ENCODE measurements at regions of chr6 and their contacts with region 1.

Region 1: GRCh38 chr6:15776458-15776980 is 113.7 kb upstream of the DTNBP1 start:
- DNase-seq: peak; percentile 71
- ATAC-seq: peak; percentile 89
- H3K4me3 Mint-ChIP-seq: peak overlapping the region; percentile 59
- H3K27ac Mint-ChIP-seq: peak overlapping the region; percentile 92
- H3K4me1 Mint-ChIP-seq: peaks cover 73% of the 10 kb centered on the region
- H3K27me3 Mint-ChIP-seq: no peaks in the 10 kb centered on the region

Region 2: DNA sequence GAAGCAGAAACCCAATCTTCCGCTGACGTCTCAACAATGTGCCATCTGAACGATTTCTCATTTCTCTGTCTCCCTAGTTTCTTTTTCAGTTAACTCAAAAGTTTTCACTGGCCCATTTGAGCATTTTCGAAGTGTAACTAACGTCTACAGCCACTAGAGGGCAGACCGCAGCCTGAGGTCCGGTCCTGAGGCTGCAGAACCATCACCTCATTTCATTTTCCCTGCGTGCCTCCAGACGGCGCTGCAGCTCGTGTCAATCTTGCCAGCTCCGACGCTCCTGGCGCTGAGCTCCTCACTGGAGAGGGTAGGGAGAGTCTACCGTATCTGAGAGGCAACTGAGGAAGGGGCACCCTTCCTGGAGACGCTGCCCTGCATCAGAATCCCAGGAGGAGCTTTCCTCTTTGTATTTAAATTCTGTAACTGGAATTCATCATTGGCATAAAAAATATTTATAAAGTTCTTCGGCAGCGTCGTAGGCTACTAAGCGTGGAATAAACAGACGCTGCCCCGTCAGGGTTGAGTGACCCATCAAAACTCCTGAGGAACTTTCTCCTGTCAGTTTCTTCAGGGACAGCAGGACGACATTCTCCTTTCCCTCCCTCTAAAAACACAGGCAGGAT is 85.2 kb before region 1 on chr6:
- CTCF ChIA-PET with region 1: interaction called, 11 read pairs
- POLR2A ChIA-PET with region 1: no interaction called
- intact Hi-C with region 1: loop called (anchors 1 to 5 kb)
- DNase-seq: peak; percentile 91
- ATAC-seq: peak; percentile 99
- H3K4me3 Mint-ChIP-seq: no peak overlapping the region
- H3K27ac Mint-ChIP-seq: peak overlapping the region; percentile 61
- H3K4me1 Mint-ChIP-seq: peaks cover 14% of the 10 kb centered on the region
- H3K27me3 Mint-ChIP-seq: peaks cover 7% of the 10 kb centered on the region

Region 3: DNA sequence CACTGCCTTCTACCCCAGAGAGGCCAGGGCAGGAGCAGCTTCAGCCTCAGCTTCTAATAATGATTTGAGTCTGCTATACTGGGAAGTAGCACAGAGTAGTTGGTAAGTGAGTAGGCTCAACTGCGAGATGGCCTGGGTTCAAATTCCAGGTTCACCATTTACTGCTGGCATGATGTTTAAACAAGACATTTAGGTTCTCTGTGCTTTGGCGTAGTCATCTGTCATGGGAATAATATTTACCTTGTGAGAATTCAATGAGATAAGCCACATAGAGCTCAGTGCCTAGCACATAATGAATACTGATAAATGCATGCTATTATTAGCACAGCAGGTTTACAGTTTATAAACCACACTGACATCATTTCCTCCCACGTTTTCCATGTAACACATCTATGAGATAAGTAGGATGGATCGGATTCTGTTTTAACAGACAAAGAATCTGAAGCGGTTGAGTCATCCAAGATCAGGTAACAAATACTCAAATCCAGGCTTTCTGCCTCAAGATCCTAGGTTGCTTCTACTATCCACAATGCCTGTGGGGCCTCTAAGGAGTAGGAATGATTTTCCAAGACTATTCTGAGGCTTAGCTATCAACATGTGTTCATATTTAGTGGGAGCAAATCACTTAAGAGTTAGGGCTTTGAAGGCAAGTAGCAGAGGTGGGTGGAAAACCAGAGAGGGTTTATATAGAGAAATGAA is 40.8 kb before region 1 on chr6:
- CTCF ChIA-PET with region 1: interaction called, 6 read pairs
- POLR2A ChIA-PET with region 1: interaction called, 17 read pairs
- intact Hi-C with region 1: loop called (anchors 1 kb)
- DNase-seq: peak; percentile 20
- ATAC-seq: peak; percentile 81
- H3K4me3 Mint-ChIP-seq: peak overlapping the region; percentile 54
- H3K27ac Mint-ChIP-seq: peak overlapping the region; percentile 83
- H3K4me1 Mint-ChIP-seq: peaks cover 54% of the 10 kb centered on the region
- H3K27me3 Mint-ChIP-seq: no peaks in the 10 kb centered on the region

Region 4: DNA sequence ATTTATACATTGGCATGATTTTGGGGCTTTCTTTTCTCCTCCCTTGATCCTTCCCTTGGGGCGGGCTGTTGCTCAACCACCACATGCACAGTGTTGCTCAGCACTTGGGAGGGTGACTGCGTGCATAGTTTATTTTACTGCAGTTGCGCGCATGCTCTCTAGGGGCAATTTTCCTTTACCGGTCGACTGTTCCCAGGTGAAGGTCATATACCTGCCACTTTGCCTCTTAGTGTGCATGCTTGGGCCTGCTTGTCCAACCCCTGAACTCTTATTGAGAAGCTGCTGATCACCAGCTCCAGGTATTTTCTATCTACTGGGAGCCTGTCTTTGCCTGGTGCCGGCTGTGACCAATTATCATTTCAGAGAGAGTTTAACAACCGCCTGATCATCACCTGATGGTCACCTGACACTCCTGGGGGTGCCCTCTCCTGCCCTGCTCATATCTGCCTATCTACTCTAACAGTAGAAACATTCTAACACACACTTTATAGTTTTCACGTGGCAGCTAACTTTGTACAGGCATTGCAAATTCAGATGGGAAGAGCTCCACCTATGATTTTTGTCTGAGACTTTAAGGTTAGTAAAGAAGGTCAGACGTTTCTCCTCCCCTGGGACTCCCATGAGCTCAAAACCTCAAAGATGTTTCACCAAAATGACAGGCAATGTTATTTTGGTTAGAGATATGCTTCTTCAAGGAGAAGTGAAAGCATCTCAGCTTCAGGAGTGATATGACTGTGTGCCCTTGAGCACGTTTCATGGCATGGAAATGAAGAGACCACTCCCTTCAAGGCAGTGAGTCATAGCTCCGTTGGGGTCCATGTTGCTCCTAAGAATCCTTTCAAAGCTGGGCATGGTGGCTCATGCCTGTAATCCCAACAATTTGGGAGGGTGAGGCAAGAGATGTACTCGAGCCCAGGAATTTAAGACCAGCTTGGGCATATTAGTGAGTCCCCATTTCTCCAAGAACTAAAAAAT is 124.9 kb after region 1 on chr6:
- CTCF ChIA-PET with region 1: interaction called, 4 read pairs
- POLR2A ChIA-PET with region 1: no interaction called
- intact Hi-C with region 1: loop called in 1 of 2 experiments (anchors 1 kb)
- DNase-seq: peak; percentile 59
- ATAC-seq: peak; percentile 96
- H3K4me3 Mint-ChIP-seq: peak overlapping the region; percentile 9
- H3K27ac Mint-ChIP-seq: peak overlapping the region; percentile 73
- H3K4me1 Mint-ChIP-seq: peaks cover 38% of the 10 kb centered on the region
- H3K27me3 Mint-ChIP-seq: peaks cover 2% of the 10 kb centered on the region

Region 5: DNA sequence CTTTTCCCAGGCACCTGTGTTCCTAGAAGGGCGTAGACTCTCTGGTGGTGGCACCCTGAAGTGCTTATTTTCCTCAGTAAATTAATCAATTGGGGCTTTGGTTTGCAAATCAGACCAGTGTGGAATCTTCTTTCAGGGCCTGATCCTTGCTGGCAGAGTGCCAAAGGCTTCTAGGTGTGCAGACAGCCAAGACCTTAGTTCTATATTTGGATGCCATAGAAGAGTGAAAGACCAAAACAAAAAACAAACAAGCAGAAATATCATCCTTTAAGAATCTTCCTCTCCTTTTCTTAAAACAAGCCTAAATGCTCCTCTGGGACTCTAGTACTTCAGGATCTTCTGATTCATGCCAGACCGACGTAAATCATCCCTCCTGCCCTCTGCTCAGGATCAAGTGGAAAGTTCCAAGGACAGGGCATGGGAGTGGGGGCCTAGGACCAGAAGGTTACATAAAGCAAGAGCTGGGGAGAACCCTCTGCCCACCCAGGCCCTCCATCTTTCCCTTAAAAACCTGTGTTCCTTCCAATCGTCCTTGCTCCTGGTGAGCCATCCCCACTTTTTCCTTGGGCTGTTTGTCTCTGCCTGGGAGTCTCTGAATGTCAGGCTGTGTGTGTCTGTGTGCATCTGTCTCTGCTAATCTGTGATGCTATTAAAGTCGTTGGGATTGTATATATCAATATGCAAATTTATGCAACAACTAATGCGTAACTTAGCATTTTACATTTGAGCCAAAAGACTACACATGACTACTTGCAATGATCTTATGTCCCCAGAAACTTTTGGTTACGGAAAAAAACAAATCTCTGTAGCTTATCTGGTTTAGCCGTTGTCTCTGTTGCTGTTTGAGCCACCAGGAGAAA is 281.9 kb after region 1 on chr6:
- CTCF ChIA-PET with region 1: no interaction called
- POLR2A ChIA-PET with region 1: no interaction called
- intact Hi-C with region 1: no loop called
- DNase-seq: no peak
- ATAC-seq: no peak
- H3K4me3 Mint-ChIP-seq: no peak overlapping the region
- H3K27ac Mint-ChIP-seq: no peak overlapping the region
- H3K4me1 Mint-ChIP-seq: no peaks in the 10 kb centered on the region
- H3K27me3 Mint-ChIP-seq: peaks cover 2% of the 10 kb centered on the region

Region 6: DNA sequence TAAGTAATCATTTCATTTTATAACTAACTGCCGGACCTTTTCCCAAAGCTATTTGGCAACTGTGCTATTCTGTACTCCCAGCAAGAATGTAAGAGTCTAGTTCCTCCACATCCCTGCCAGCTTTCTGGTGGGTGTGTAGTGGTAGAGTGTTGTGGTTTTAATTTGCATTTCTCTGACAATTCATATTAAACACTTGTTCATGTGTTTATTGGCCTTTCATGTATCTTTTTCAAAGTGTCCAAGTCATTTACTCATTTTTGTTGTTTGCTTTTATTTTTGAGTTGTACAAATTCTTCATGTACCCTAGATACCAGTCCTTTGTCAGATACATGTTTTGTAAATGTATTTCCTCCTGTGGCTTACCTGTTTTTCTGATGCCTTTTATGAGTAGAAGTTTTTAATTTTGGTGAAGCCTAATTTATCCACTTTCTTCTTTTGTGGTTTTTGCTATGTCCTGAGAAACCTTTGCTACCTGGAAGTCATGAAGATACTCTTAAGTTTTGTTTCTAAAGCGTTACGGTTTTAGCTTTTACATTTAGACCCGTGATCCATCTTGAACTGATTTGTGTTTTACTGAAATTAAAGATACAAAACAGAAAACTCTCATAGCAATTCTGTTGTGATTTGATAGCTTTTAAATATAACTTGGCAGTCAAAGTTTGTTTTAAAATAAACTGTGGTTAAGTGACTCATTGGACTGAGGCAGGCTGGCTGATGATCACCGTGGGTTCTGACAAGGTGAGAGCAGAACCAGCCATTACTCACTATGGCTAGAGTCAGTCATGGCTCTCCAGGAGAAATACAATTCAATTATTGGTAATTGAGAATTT is 360.3 kb after region 1 on chr6:
- CTCF ChIA-PET with region 1: interaction called, 6 read pairs
- POLR2A ChIA-PET with region 1: no interaction called
- intact Hi-C with region 1: loop called in 1 of 2 experiments (anchors 2 kb)
- DNase-seq: peak; percentile 75
- ATAC-seq: peak; percentile 89
- H3K4me3 Mint-ChIP-seq: peak overlapping the region; percentile 56
- H3K27ac Mint-ChIP-seq: peak overlapping the region; percentile 86
- H3K4me1 Mint-ChIP-seq: peaks cover 79% of the 10 kb centered on the region
- H3K27me3 Mint-ChIP-seq: no peaks in the 10 kb centered on the region

Measured in activated CD4-positive, alpha-beta T cell treated with anti-CD3 and anti-CD28 coated beads for 36 hours (primary cell).